Posterior vena cava (tissue), 2 donors: ENCODE measurements at regions of chr4 and their contacts with region 1.

Region 1: DNA sequence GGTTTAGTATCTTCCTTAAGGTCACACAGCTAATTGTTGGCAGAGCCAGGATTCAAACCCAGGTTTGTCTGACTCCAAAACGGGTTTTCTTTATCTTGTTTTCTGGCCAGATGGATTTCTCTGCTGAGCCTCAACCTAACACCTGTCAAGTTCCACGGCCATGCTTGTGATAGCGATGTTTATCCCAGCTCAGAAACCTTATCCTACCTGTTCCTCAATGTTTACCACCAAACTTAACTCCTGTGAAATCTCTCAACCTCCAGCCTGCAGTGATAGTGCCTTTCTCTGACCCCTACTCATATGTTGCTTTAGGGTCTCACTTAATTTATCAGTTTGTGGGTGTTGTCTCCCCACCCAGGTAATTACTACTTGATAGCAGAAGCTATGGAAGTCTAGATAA is 246.0 kb downstream of the DCTD start:
- DNase-seq: no peak

Region 2: GRCh38 chr4:182629096-182629495 is 42.1 kb before region 1 on chr4:
- intact Hi-C with region 1: loop called in 1 of 2 experiments (anchors 1 kb)
- DNase-seq: no peak